ENCODE measurements at regions of chr3 and their contacts with region 1.

Region 1: GRCh38 chr3:9915254-9916141 is 1.4 kb upstream of the IL17RC start:
- DNase-seq: peak in 1 of 2 experiments; percentile 81
- H3K4me3 ChIP-seq: peak overlapping the region; percentile 46 to 72 (median 48)
- H3K27ac ChIP-seq: no peak overlapping the region
- H3K4me1 ChIP-seq: peaks cover 0 to 20% (median 17%) of the 10 kb centered on the region in 4 experiments; a peak in 6 of 7 replicates
- H3K27me3 ChIP-seq: peaks cover 0 to 18% (median 10%) of the 10 kb centered on the region in 4 experiments; a peak in 5 of 7 replicates
- CTCF ChIP-seq: 0 out of 4 replicates have a peak, but pooled peaks of 1 of the 3 experiments have one; percentile 23
- EP300 ChIP-seq: 0 out of 3 replicates have a peak, but pooled peaks of 1 of the 2 experiments have one; percentile 18
- POLR2A ChIP-seq: peak in 1 of 2 experiments; percentile 59; a peak in 1 of 3 replicates
- RAD21 ChIP-seq: peak in 1 of 2 experiments; percentile 12; a peak in 2 of 4 replicates

Region 2: DNA sequence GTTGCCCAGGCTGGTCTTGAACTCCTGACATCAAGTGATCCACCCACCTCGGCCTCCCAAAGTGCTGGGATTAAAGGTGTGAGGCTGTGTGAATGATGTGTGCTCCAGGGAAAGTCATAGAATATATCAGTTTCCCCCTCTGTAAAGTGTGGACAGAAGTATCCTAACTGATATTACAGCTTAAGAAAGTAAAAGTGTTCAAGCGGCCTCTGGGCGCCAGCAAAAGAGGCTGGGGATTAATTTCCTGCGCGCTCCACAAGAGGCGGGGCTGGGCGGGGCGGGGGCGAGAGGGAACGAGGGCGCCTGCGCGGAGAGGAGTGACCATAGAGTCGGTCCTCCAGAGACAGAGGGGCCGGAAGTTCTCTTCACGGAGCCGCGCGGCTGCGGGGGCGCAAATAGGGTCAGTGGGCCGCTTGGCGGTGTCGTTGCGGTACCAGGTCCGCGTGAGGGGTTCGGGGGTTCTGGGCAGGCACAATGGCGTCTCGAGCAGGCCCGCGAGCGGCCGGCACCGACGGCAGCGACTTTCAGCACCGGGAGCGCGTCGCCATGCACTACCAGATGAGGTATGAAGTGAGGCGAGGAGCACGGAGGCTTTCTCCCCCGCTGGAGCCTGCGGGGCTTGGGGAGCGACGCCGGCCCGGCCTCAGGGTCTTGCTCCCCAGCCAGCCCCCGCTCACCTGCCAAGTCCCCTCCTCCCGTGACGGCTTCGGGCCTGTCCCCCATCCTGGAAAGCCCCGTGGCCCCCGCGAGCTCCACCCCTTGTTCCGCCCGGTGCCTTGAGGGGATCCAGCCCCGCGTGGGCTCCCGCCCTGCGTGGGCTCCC is 25.0 kb before region 1 on chr3 and contains the start of gene JAGN1:
- CTCF ChIA-PET with region 1: interaction called, 4 read pairs
- POLR2A ChIA-PET with region 1: interaction called, 13 read pairs
- DNase-seq: peak; percentile 64 to 97
- H3K4me3 ChIP-seq: peak within 1 kb of the TSS; percentile 88 to 98 (median 90)
- H3K27ac ChIP-seq: peak within 1 kb of the TSS; percentile 89
- H3K4me1 ChIP-seq: peaks cover 0 to 2% (median 0%) of the 10 kb centered on the region in 4 experiments; a peak in 1 of 7 replicates
- H3K27me3 ChIP-seq: no peaks in the 10 kb centered on the region
- CTCF ChIP-seq: no peak
- EP300 ChIP-seq: no peak
- POLR2A ChIP-seq: peak; percentile 92 to 95
- RAD21 ChIP-seq: no peak
- total RNA-seq, gene JAGN1: 26.8 and 26.9 TPM in 2 replicates

Region 3: DNA sequence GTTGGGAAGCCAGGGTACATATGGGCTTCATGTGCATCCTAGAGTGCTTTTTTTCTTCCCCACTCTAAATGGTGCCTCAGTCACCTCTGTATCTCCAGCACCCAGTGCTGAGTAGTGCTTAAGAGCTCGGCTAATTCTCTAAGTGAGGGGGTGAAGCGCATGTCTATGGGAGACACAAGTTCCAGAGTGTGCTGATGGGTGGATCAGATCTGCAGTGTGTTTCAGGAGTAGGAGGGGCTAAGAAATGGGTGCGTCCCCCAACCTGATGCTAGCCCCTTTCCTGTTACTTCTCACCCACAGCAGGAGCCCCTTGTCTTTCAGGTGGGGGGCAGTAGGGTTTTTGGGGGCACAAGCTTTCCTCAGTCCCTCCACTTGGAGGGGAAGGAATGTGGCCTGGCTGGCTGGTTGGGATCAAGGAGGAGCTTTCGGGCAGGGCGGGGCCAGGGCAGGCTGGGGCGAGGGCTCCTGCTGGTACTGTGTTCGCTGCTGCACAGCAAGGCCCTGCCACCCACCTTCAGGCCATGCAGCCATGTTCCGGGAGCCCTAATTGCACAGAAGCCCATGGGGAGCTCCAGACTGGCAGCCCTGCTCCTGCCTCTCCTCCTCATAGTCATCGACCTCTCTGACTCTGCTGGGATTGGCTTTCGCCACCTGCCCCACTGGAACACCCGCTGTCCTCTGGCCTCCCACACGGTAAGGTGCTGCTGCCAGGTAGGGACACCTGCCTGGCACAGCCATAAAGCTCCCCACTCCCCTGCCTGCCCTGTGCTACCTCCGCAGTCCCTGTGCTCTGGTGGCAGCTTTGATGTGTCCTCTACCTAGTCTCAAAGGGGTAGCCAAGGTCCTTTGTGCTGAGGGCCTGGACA is 12.9 kb before region 1 on chr3 and contains the start of gene IL17RE:
- CTCF ChIA-PET with region 1: interaction called, 5 read pairs
- POLR2A ChIA-PET with region 1: interaction called, 43 read pairs
- DNase-seq: peak in 1 of 2 experiments; percentile 73
- H3K4me3 ChIP-seq: peak within 1 kb of the TSS in 2 of 4 experiments; percentile 2 to 30; a peak in 2 of 8 replicates
- H3K27ac ChIP-seq: no peak within 1 kb of the TSS
- H3K4me1 ChIP-seq: peaks cover 5 to 14% (median 11%) of the 10 kb centered on the region in 4 experiments
- H3K27me3 ChIP-seq: no peaks in the 10 kb centered on the region
- CTCF ChIP-seq: no peak
- EP300 ChIP-seq: no peak
- POLR2A ChIP-seq: 0 out of 3 replicates have a peak, but pooled peaks of 1 of the 2 experiments have one; percentile 17
- RAD21 ChIP-seq: no peak
- total RNA-seq, gene IL17RE: 4.4 and 4.9 TPM in 2 replicates

Region 4: DNA sequence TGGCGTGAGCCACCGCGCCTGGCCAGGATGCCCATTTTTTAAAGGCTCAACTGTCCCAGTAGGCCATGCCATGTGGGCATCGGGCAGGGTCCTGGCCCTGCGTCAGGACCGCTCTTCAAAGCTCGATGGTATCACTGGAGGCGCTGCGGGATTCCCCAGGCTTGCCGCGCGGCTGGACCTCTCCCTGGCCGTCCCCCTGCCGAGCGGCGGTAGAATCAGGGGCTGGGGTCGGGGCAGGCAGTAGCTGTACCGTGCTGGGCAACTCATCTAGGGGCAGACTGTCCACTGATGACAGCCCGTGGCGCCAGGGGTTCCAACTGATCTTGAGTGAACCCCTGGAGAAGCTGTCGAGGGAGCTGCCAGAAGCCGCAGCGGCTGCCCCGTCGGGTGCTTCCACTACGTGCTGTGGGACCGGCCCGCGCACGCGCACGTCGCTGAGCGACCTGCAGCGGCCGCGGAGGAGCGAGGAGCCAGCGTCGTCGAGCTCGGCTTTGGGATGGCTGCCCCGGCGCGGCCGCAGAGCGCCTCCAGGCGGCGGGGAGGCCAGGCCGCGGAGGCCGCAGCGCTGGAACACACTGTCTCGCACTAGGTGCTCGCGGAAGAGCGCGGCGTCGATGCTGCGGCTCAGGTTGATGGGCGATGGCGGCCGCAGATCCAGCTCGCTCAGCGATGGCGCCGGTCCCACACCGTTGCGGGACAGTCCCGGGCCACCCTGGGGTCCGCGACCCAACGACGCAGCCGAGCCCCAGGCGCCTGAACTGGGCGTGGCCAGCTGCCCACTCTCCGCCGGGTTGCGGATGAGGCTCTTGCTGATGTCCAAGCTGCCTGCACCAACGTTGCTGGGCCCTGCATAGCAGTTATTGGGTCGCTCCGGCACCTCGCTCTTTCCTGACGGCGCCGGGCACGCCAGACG is 30.9 kb after region 1 on chr3:
- CTCF ChIA-PET with region 1: interaction called, 8 read pairs
- POLR2A ChIA-PET with region 1: interaction called, 15 read pairs
- DNase-seq: peak; percentile 70 to 89
- H3K4me3 ChIP-seq: peak overlapping the region; percentile 42 to 69 (median 51)
- H3K27ac ChIP-seq: no peak overlapping the region
- H3K4me1 ChIP-seq: peaks cover 0 to 8% (median 4%) of the 10 kb centered on the region in 4 experiments; a peak in 5 of 7 replicates
- H3K27me3 ChIP-seq: no peaks in the 10 kb centered on the region
- CTCF ChIP-seq: peak in 2 of 3 experiments; percentile 89 to 92; a peak in 3 of 4 replicates
- EP300 ChIP-seq: peak in 1 of 2 experiments; percentile 71; a peak in 1 of 3 replicates
- POLR2A ChIP-seq: peak in 1 of 2 experiments; percentile 69; a peak in 2 of 3 replicates
- RAD21 ChIP-seq: peak; percentile 70 to 78

Region 5: DNA sequence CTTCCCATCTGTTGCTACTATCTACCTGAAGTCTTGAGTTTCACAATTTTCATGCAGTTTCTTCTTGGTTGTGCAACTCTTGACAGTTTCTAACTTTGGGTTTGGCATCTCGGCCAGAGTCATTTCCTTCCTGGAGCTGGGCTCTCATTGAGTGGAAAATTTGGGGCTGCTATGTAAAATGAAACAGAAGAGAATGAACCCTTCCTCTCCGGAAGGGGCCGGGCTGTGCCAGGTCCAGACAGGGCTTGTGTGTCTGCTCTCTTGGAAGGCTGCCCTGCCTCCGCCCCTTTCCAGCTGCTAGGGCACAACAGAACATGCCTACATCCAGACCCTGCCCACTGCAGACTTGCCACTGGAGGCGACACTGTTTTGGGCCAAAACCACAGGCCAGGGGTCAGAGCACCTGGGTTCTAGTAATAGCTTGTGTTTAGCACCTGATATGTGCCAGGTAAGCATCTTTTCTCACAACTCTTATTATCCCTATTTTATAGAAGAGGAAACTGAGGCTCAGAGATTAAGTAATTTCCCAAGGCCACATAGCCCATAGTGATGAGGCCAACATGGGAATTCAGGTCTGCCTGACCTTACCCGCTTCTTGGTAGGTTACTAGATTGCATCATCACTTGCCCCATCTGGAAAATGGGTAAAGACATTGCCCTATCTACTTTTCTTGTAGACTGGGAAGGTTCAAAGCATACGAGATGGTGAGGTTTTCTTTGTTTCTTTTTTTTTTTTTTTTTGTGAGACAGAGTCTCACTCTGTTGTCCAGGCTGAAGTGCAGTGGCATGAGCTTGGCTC is 274.3 kb after region 1 on chr3:
- CTCF ChIA-PET with region 1: no interaction called
- POLR2A ChIA-PET with region 1: no interaction called
- DNase-seq: no peak
- H3K4me3 ChIP-seq: no peak overlapping the region
- H3K27ac ChIP-seq: no peak overlapping the region
- H3K4me1 ChIP-seq: peaks cover 0 to 11% (median 9%) of the 10 kb centered on the region in 4 experiments; a peak in 6 of 7 replicates
- H3K27me3 ChIP-seq: no peaks in the 10 kb centered on the region
- CTCF ChIP-seq: no peak
- EP300 ChIP-seq: no peak
- POLR2A ChIP-seq: no peak
- RAD21 ChIP-seq: no peak